Dorsolateral prefrontal cortex (tissue), 120 donors: ENCODE measurements at regions of chr11 and their contacts with region 1.

Region 1: GRCh38 chr11:83521647-83522596 is 235.8 kb upstream of the CCDC90B start:
- DNase-seq: no peak
- H3K4me3 ChIP-seq: no peak overlapping the region
- H3K27ac ChIP-seq: peak overlapping the region in 13 of 59 donors; percentile 7 to 61 (median 33)
- H3K27me3 ChIP-seq: no peaks in the 10 kb centered on the region
- CTCF ChIP-seq: peak in 39 of 56 donors; percentile 10 to 58 (median 30)

Region 2: GRCh38 chr11:83292709-83293456 is 229.0 kb before region 1 on chr11:
- intact Hi-C with region 1: loop called in 1 of 2 experiments (anchors 10 kb)
- DNase-seq: peak in 3 of 10 donors; percentile 10 to 57 (median 47)
- H3K4me3 ChIP-seq: peak overlapping the region in 55 of 59 donors; percentile 4 to 64 (median 40)
- H3K27ac ChIP-seq: peak overlapping the region in 54 of 59 donors; percentile 13 to 88 (median 68)
- H3K27me3 ChIP-seq: no peaks in the 10 kb centered on the region
- CTCF ChIP-seq: peak; percentile 61 to 93 (median 84)

Region 3: GRCh38 chr11:83502041-83502440 is 19.9 kb before region 1 on chr11:
- intact Hi-C with region 1: no loop called
- DNase-seq: no peak
- H3K4me3 ChIP-seq: no peak overlapping the region
- H3K27ac ChIP-seq: peak overlapping the region in 2 of 59 donors; percentile 1 to 24
- H3K27me3 ChIP-seq: no peaks in the 10 kb centered on the region
- CTCF ChIP-seq: no peak